HepG2 (cell line): ENCODE measurements at regions of chr15 and their contacts with region 1.

Region 1: GRCh38 chr15:51649659-51650521 is 27.3 kb upstream of the DMXL2 start:
- DNase-seq: peak; percentile 68
- ATAC-seq: peak; percentile 81
- H3K4me3 ChIP-seq: no peak overlapping the region
- H3K27ac ChIP-seq: no peak overlapping the region
- H3K4me1 ChIP-seq: no peaks in the 10 kb centered on the region
- H3K27me3 ChIP-seq: no peaks in the 10 kb centered on the region
- CTCF ChIP-seq: peak; percentile 85
- EP300 ChIP-seq: no peak
- POLR2A ChIP-seq: no peak
- RAD21 ChIP-seq: peak; percentile 70

Region 2: GRCh38 chr15:51405693-51406523 is 244.0 kb before region 1 on chr15:
- CTCF ChIA-PET with region 1: no interaction called
- POLR2A ChIA-PET with region 1: no interaction called
- in situ Hi-C with region 1: no loop called
- intact Hi-C with region 1: no loop called
- DNase-seq: no peak
- ATAC-seq: no peak
- H3K4me3 ChIP-seq: no peak overlapping the region
- H3K27ac ChIP-seq: no peak overlapping the region
- H3K4me1 ChIP-seq: peaks cover 16% of the 10 kb centered on the region
- H3K27me3 ChIP-seq: no peaks in the 10 kb centered on the region; a peak in 2 of 5 replicates
- CTCF ChIP-seq: no peak
- EP300 ChIP-seq: no peak
- POLR2A ChIP-seq: no peak
- RAD21 ChIP-seq: no peak

Region 3: GRCh38 chr15:51771773-51772172 is 121.9 kb after region 1 on chr15:
- CTCF ChIA-PET with region 1: interaction called, 107 read pairs
- POLR2A ChIA-PET with region 1: interaction called, 6 read pairs
- in situ Hi-C with region 1: loop called (anchors 5 kb)
- intact Hi-C with region 1: loop called (anchors 1 kb)
- DNase-seq: no peak
- ATAC-seq: no peak
- H3K4me3 ChIP-seq: no peak overlapping the region
- H3K27ac ChIP-seq: no peak overlapping the region
- H3K4me1 ChIP-seq: peaks cover 4% of the 10 kb centered on the region; the same call in 1 of the 2 replicates
- H3K27me3 ChIP-seq: peaks cover 0 to 12% of the 10 kb centered on the region in 2 experiments; a peak in 3 of 5 replicates
- CTCF ChIP-seq: no peak
- EP300 ChIP-seq: no peak
- POLR2A ChIP-seq: no peak
- RAD21 ChIP-seq: no peak

Region 4: GRCh38 chr15:51776952-51777574 is 127.2 kb after region 1 on chr15:
- CTCF ChIA-PET with region 1: interaction called, 107 read pairs
- POLR2A ChIA-PET with region 1: interaction called, 6 read pairs
- in situ Hi-C with region 1: loop called (anchors 5 kb)
- intact Hi-C with region 1: loop called (anchors 1 kb)
- DNase-seq: peak; percentile 74
- ATAC-seq: peak; percentile 94
- H3K4me3 ChIP-seq: no peak overlapping the region
- H3K27ac ChIP-seq: no peak overlapping the region
- H3K4me1 ChIP-seq: peaks cover 6% of the 10 kb centered on the region; the same call in 1 of the 2 replicates
- H3K27me3 ChIP-seq: no peaks in the 10 kb centered on the region
- CTCF ChIP-seq: peak; percentile 83
- EP300 ChIP-seq: no peak
- POLR2A ChIP-seq: no peak
- RAD21 ChIP-seq: peak; percentile 51; the same call in 1 of the 2 replicates

Region 5: DNA sequence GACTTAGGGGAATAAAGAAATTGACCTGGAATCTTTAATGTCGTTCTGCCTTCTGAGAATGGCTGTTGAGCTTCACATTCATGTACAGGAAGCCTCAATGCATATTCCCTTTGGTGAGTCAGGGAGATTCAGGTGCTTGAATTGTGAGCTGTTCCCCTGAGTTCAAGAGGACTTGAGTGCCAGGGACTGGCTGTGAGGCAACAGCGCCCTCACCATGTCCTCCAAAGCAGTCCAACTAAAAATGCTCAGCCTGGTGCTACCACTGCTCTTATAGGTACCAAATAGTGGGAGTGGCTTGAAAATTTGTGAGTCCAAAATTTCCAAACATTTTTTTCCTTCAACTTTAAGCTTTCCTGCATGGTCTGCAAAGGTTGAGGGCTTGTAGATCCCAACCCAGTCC is 267.6 kb after region 1 on chr15:
- CTCF ChIA-PET with region 1: no interaction called
- POLR2A ChIA-PET with region 1: no interaction called
- in situ Hi-C with region 1: loop called (anchors 25 kb)
- intact Hi-C with region 1: no loop called
- DNase-seq: peak; percentile 50
- ATAC-seq: peak; percentile 87
- H3K4me3 ChIP-seq: no peak overlapping the region
- H3K27ac ChIP-seq: no peak overlapping the region
- H3K4me1 ChIP-seq: peaks cover 19% of the 10 kb centered on the region
- H3K27me3 ChIP-seq: no peaks in the 10 kb centered on the region
- CTCF ChIP-seq: peak; percentile 80
- EP300 ChIP-seq: no peak
- POLR2A ChIP-seq: no peak
- RAD21 ChIP-seq: peak; percentile 58